ENCODE measurements at regions of chr4 and their contacts with region 1.

Region 1: DNA sequence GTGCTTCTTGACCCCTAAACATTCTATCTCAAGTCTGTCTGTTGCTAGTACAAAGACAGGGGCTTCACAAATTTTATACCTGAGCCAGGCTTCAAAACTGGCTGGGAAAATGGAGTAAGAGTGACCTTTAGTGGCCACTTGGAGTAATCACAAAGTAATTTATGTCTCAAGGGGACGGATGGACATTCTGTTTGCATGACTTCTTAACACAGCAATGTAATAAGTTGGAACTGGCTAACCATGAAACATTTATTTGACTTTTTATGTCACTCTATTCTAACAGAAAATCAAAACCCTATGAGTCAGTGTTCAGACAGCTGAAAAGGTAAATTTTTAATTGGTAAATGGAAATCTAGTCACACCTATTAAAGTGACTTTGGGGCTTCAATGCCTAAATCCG is 600.6 kb downstream of the ANKRD50 start:
- DNase-seq: no peak
- H3K4me3 ChIP-seq: no peak overlapping the region
- H3K27ac ChIP-seq: no peak overlapping the region
- H3K4me1 ChIP-seq: peaks cover 5% of the 10 kb centered on the region
- H3K27me3 ChIP-seq: no peaks in the 10 kb centered on the region
- CTCF ChIP-seq: peak; percentile 28 to 66 (median 39)
- POLR2A ChIP-seq: no peak

Region 2: DNA sequence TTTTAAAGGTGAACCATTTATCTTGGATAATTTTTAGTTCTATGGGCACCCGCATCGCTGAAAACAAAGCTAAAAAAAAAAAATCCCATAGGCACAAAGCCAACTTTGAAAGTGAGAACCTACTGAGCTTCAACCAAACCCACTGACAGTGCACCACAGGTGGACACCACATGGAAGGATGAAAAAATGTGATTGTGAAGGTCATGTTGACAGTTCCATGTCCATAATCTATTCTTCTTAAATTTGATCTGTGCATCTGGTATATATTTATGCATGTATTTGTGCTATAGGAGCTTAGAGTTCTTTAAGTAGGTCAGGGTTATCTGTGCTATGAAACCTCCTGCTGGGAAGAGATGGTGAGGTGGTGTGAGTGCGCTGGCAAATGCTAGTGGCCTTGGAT is 341.0 kb before region 1 on chr4:
- intact Hi-C with region 1: loop called (anchors 5 kb)
- DNase-seq: no peak
- H3K4me3 ChIP-seq: no peak overlapping the region
- H3K27ac ChIP-seq: no peak overlapping the region
- H3K4me1 ChIP-seq: no peaks in the 10 kb centered on the region
- H3K27me3 ChIP-seq: no peaks in the 10 kb centered on the region
- CTCF ChIP-seq: no peak
- POLR2A ChIP-seq: no peak

Region 3: DNA sequence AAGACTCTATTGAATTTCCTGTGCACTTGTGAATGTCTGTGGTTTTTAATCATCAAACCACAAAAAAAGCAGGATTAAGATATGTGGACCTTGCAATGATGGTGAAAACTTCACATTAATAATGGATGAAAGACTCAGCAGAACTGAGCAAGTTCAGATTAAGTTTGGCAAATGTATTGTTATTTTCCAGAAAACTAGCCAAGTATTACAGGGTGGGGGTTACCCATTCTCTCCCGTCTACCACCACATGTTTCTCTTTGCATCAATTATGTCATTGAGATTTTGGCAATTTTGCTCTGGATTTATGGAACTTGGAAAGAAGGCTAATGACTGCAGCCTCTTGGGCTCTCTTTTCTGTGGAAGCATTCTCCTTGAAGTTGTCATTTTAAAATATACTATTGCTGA is 23.5 kb after region 1 on chr4:
- intact Hi-C with region 1: no loop called
- DNase-seq: no peak
- H3K4me3 ChIP-seq: no peak overlapping the region
- H3K27ac ChIP-seq: no peak overlapping the region
- H3K4me1 ChIP-seq: no peaks in the 10 kb centered on the region
- H3K27me3 ChIP-seq: no peaks in the 10 kb centered on the region
- CTCF ChIP-seq: no peak
- POLR2A ChIP-seq: no peak

Measured in vagina (tissue), 2 donors.